Activated naive CD4-positive, alpha-beta T cell treated with anti-CD3 and anti-CD28 coated beads for 36 hours (primary cell): ENCODE measurements at regions of chr11 and their contacts with region 1.

Region 1: DNA sequence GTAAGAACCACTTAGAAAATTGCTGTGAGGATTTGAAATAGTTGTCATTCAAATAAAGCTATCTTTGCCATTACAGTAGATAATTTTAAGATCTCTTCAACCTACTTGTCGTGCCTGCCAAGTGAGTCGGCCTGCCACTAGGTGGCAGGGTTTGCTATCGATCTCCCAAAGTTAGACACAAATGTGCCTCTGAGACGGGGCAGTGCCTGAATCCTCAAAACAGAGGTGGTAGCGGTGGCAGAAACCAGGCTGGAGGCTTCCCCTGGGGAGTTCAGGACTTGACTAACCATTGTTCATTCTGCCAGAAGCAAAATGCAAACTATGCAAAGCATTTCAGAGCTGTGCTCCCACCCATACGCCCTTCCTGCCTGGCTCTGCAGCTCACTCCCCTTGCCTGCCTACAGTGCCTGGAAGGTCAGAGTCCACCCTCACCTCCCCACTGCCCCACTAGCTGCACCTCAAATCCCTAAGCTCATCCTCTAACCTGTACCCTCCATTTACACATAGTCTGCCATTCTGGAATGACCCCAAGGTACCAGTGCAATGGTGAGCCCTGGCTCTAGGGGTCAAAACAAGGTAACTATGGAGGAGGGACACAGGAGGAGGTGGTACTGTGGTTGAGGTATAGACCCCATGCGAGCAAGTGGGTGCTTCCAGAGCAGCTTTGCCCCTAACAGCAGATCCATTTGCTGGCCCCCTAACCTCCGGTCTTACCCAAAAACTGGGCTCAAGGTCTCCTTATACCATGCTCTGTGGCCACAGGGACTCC is 82.1 kb downstream of the C11orf58 start:
- DNase-seq: peak; percentile 87
- H3K4me3 Mint-ChIP-seq: no peak overlapping the region
- H3K27ac Mint-ChIP-seq: no peak overlapping the region
- H3K4me1 Mint-ChIP-seq: peaks cover 4% of the 10 kb centered on the region
- H3K27me3 Mint-ChIP-seq: peaks cover 2% of the 10 kb centered on the region

Region 2: DNA sequence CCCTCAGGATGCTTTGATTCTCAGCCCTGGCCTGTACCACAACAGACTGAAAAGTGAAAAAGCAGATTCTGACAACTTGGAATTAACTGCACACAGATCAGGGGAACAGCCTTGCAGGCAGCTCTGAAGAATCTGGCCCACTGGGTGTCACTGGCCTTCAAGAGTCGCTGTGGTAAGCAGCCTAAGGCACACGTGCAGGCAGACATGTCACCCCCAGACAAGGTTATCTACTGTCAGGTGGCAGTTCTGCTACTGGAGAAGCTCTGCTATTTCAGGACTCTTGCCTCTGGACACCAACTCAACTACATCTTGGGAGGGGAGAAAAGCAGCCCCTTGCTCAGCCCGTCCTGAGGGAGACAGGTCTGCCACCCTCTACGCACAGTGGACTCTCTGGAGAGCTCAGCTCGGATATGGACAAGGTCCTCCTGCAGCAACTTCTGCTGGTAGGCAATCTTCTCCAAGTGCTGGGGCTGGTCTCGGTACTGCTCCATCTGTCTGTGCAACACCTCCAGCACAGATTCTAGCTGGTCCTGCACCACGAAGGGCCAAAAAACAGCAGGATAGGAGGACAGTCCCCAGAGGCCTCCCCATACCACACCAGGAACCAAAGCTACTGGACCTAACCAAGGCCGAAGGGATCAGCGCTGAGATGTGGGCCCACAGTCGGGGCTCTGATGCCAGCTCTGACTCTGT is 19.1 kb before region 1 on chr11:
- CTCF ChIA-PET with region 1: interaction called, 11 read pairs
- intact Hi-C with region 1: no loop called
- DNase-seq: no peak
- H3K4me3 Mint-ChIP-seq: no peak overlapping the region
- H3K27ac Mint-ChIP-seq: no peak overlapping the region
- H3K4me1 Mint-ChIP-seq: peaks cover 8% of the 10 kb centered on the region
- H3K27me3 Mint-ChIP-seq: no peaks in the 10 kb centered on the region

Region 3: GRCh38 chr11:16831316-16832192 is 11.0 kb after region 1 on chr11:
- CTCF ChIA-PET with region 1: interaction called, 19 read pairs
- intact Hi-C with region 1: no loop called
- DNase-seq: no peak
- H3K4me3 Mint-ChIP-seq: no peak overlapping the region
- H3K27ac Mint-ChIP-seq: no peak overlapping the region
- H3K4me1 Mint-ChIP-seq: peaks cover 14% of the 10 kb centered on the region
- H3K27me3 Mint-ChIP-seq: no peaks in the 10 kb centered on the region

Region 4: GRCh38 chr11:16924826-16925560 is 104.5 kb after region 1 on chr11:
- CTCF ChIA-PET with region 1: interaction called, 13 read pairs
- intact Hi-C with region 1: loop called (anchors 5 kb)
- DNase-seq: no peak
- H3K4me3 Mint-ChIP-seq: peak overlapping the region; percentile 55
- H3K27ac Mint-ChIP-seq: no peak overlapping the region
- H3K4me1 Mint-ChIP-seq: peaks cover 11% of the 10 kb centered on the region
- H3K27me3 Mint-ChIP-seq: peaks cover 52% of the 10 kb centered on the region

Region 5: DNA sequence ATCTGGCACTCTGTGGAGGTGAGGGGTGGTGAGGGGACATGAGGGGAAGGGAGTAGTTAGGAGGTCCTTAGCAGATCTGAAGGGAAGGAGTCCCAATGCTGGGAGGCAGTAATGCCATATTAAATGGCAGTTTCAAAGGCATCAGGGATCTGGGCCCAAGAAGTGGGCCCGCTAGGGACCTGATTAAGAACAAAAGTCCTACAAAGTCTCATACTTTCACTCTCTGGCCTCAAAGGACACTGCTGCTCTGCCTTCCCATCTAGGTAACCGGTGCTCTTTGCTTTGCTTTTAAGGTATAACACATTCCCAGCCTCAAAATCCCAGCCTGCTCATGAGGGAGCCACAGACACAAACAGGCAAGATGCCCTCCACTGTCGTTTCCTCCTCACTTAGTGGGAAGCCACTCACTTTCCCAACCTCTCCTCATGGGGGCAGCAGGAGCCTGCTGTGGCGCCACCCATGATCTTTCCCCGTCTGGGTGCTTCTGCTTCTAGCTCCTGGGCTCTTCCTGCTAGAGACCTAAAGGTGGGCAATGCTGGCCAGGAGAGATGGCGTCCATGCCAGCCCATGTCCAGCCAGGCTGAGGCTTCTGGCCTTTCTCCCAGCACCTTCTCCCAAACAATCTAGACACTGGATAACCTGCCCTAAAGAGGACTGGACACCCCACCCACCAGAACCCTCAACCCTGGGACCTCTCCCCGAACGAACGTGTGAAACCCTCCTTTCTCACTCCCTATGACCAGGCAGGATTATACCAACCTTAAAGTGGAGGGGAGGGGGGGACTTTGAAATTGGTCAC is 125.4 kb after region 1 on chr11:
- CTCF ChIA-PET with region 1: interaction called, 10 read pairs
- intact Hi-C with region 1: no loop called
- DNase-seq: peak; percentile 70
- H3K4me3 Mint-ChIP-seq: no peak overlapping the region
- H3K27ac Mint-ChIP-seq: no peak overlapping the region
- H3K4me1 Mint-ChIP-seq: peaks cover 3% of the 10 kb centered on the region
- H3K27me3 Mint-ChIP-seq: no peaks in the 10 kb centered on the region

Region 6: GRCh38 chr11:17077520-17078401 is 257.3 kb after region 1 on chr11 and contains the start of gene RPS13:
- CTCF ChIA-PET with region 1: interaction called, 7 read pairs
- intact Hi-C with region 1: loop called (anchors 5 kb)
- DNase-seq: peak; percentile 97
- H3K4me3 Mint-ChIP-seq: peak within 1 kb of the TSS; percentile 93
- H3K27ac Mint-ChIP-seq: peak within 1 kb of the TSS; percentile 97
- H3K4me1 Mint-ChIP-seq: peaks cover 27% of the 10 kb centered on the region
- H3K27me3 Mint-ChIP-seq: no peaks in the 10 kb centered on the region
- total RNA-seq, gene RPS13: 2,045 to 2,099 TPM